ENCODE measurements at regions of chr19 and their contacts with region 1.

Region 1: DNA sequence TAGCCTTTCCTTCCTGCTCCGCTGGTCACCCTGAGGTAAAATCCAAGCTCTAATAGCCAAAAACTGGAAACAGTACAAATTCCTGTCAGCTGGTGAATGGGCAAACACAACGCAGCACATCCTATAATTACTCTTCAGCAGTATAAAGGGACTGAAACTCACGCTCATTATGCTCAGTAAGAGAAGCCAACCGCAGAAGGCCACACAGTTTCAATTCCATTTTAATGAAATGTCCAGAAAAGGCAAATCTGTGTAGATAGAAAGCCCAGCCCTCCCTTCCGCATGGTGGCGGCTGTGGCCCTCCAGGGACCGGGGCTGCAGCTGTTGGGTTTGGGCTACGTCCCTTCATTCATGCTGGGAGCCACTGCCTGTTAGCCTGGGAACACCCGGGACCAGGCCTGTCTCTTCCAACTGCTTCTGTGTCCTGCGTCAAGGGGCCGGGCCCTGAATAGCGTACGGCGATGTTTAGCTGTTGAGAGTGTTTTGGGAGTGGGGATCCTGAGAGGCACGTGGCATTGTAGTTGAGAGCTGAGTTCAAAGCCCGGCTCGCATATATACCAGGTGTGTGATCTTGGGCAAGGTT is 23.5 kb downstream of the NKPD1 start:
- DNase-seq: no peak
- H3K4me3 Mint-ChIP-seq: no peak overlapping the region
- H3K27ac Mint-ChIP-seq: no peak overlapping the region
- H3K4me1 Mint-ChIP-seq: no peaks in the 10 kb centered on the region
- H3K27me3 Mint-ChIP-seq: no peaks in the 10 kb centered on the region
- CTCF ChIP-seq: no peak

Region 2: GRCh38 chr19:44925114-44925891 is 212.0 kb before region 1 on chr19:
- CTCF ChIA-PET with region 1: no interaction called
- intact Hi-C with region 1: no loop called
- DNase-seq: no peak
- H3K4me3 Mint-ChIP-seq: no peak overlapping the region
- H3K27ac Mint-ChIP-seq: no peak overlapping the region
- H3K4me1 Mint-ChIP-seq: peaks cover 6% of the 10 kb centered on the region
- H3K27me3 Mint-ChIP-seq: peaks cover 62% of the 10 kb centered on the region
- CTCF ChIP-seq: no peak

Region 3: DNA sequence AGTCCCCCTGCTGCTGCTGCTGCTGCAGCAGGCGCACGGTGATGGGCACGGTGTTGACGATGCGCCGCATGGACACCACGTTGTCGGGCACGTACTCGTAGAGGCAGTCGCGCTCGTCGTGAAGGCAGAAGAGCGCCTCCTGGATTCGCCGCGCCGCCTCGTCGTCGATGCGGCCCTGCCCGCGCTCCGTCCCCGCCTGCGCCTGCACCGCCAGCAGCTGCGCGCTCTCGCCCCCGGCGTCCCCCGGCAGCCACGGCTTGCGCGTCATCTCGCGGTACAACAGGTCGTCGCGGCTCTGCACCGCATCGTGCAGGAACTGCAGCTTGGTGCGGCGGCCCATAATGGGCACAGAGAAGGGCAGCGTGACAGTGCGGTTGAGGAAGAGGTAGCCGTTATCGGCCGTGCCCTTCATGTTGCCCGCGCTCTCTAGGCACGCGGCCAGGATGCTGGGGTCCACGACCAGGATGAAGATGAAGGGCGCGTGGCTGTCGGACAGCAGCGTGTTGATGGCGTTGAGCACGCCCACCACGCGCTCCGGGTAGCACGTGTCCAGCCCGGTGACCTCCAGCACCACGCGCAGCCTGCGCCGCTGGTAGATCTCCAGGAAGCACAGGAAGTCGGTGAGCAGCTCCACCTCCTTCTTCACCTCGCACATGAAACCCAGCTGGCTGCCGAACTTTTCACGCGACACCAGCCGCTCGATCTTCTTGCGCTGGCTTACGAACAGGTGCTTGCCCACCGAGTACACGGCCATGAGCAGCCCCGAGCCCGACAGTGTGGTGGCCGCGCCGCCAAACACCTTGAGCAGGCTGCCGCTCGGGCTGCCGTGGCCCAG is 15.5 kb after region 1 on chr19:
- CTCF ChIA-PET with region 1: interaction called, 11 read pairs
- intact Hi-C with region 1: no loop called
- DNase-seq: no peak
- H3K4me3 Mint-ChIP-seq: no peak overlapping the region
- H3K27ac Mint-ChIP-seq: no peak overlapping the region
- H3K4me1 Mint-ChIP-seq: peaks cover 28% of the 10 kb centered on the region
- H3K27me3 Mint-ChIP-seq: peaks cover 13% of the 10 kb centered on the region
- CTCF ChIP-seq: no peak